ENCODE measurements at regions of chr21 and their contacts with region 1.

Region 1: DNA sequence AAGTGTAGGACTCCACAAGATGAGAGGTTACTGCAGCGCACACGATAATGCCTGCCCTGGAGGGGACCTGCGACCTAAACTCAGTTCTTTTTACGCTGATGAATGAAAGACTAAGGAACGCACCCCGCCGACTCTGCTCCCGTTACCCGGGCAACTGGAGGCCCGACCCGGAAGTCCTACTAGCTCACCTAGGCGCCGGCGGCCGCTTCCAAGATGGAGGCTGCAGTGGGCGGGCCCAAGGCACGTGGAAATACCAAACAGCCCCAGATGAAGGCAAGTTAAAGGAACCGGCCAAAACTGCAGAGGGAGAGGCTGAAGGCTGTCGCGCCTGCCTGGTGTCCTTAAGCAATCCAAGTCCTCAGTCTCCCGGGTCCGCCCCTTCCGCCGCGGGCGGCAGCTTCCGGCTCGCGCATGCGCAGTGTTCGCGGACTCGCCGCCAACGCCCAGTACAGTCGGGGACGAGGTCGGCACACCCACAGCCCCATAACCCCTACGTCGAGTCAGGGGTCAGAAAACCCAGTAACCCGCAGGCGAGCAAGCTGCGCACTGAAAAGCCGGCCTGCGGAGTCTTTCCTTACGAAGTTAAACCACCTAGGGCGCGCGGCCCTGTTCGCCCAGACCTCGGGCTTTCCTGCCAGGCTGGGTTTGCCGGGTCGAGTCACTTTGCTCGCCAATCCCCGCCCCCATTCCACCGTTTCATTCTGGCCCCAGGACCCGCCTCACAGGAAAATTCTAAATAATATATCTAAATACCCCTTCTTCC is at the start of gene SETD4:
- DNase-seq: peak; percentile 92
- ATAC-seq: peak; percentile 92
- H3K4me3 Mint-ChIP-seq: peak within 1 kb of the TSS; percentile 91
- H3K27ac Mint-ChIP-seq: peak within 1 kb of the TSS; percentile 93
- H3K4me1 Mint-ChIP-seq: peaks cover 32% of the 10 kb centered on the region
- H3K27me3 Mint-ChIP-seq: no peaks in the 10 kb centered on the region
- total RNA-seq, gene SETD4: 17.9 to 20.9 TPM

Region 2: DNA sequence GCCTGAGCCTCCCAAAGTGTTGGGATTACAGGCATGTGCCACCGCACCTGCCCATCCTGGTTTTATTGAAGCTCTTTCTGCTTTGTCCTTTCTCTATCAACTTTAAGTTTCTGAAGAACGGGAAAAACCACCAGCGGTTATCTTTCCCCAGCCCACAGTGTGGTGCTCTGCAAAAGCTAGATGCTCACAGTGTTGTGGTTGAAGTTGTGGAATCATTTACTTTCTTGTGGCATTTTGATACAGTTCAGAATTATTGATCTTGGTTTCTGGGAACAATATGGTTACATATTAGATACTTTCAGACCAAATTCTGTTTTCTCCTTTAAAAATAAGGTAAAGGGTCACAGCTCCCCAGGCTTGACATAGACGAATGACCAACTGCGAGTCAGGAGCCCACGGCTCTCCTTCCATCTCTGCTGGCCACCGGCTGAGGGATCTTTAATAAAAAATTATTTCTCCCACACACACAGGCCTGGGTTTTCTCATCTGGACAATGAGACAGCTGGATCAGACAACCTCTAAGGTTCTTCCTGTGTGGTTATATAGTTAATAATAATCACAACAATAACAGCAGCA is 385.4 kb before region 1 on chr21:
- CTCF ChIA-PET with region 1: no interaction called
- DNase-seq: no peak
- ATAC-seq: no peak
- H3K4me3 Mint-ChIP-seq: no peak overlapping the region
- H3K27ac Mint-ChIP-seq: no peak overlapping the region
- H3K4me1 Mint-ChIP-seq: no peaks in the 10 kb centered on the region
- H3K27me3 Mint-ChIP-seq: peaks cover 9% of the 10 kb centered on the region

Region 3: GRCh38 chr21:35882791-35883240 is 177.5 kb before region 1 on chr21:
- CTCF ChIA-PET with region 1: no interaction called
- DNase-seq: no peak
- ATAC-seq: no peak
- H3K4me3 Mint-ChIP-seq: no peak overlapping the region
- H3K27ac Mint-ChIP-seq: no peak overlapping the region
- H3K4me1 Mint-ChIP-seq: no peaks in the 10 kb centered on the region
- H3K27me3 Mint-ChIP-seq: peaks cover 24% of the 10 kb centered on the region

Region 4: GRCh38 chr21:36047139-36047538 is 13.2 kb before region 1 on chr21:
- CTCF ChIA-PET with region 1: no interaction called
- DNase-seq: no peak
- ATAC-seq: no peak
- H3K4me3 Mint-ChIP-seq: no peak overlapping the region
- H3K27ac Mint-ChIP-seq: no peak overlapping the region
- H3K4me1 Mint-ChIP-seq: no peaks in the 10 kb centered on the region
- H3K27me3 Mint-ChIP-seq: no peaks in the 10 kb centered on the region

Region 5: DNA sequence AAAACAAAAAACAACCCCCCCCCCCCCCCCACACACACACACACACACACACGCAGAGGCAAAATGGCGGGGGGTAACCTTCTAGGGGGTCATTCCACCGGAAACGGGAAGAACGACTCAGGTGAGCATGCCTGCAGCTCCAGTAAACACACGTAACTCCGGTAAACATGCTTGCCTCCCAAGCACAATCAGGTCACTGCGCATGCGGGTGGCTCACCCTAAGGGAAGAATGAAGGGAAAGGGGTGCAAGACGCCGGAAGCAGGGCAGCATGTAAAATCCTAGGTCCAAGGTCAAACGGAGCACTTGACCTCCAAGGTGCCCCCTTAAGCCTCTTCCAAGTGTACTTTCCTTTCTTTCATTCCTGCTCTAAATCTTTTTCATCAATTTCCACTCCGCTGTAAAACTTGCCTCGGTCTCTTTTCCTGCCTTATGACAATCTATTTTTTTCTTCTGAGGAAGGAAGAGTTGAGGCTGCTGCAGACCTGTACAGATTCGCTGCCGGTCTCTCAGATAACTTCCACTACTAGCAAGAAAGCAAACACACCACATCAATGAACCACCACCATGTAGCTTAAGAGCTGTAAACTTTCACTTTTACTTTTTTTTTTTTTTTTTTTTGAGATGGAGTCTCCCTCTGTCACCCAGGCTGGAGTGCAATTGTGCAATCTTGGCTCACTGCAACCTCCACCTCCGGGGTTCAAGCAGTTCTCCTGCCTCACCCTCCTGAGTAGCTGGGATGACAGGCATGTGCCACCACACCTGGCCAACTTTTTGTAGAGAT is 53.5 kb after region 1 on chr21:
- CTCF ChIA-PET with region 1: interaction called, 14 read pairs
- DNase-seq: no peak
- ATAC-seq: no peak
- H3K4me3 Mint-ChIP-seq: no peak overlapping the region
- H3K27ac Mint-ChIP-seq: peak overlapping the region; percentile 53
- H3K4me1 Mint-ChIP-seq: peaks cover 24% of the 10 kb centered on the region
- H3K27me3 Mint-ChIP-seq: peaks cover 11% of the 10 kb centered on the region

Measured in activated CD8-positive, alpha-beta memory T cell treated with anti-CD3 and anti-CD28 coated beads, Interleukin-2, amount 10 ng/mL, durations not matched to agents 7 days and 5 days (primary cell).